Right ventricle myocardium inferior (tissue), 1 donor: ENCODE measurements at regions of chr12 and their contacts with region 1.

Region 1: DNA sequence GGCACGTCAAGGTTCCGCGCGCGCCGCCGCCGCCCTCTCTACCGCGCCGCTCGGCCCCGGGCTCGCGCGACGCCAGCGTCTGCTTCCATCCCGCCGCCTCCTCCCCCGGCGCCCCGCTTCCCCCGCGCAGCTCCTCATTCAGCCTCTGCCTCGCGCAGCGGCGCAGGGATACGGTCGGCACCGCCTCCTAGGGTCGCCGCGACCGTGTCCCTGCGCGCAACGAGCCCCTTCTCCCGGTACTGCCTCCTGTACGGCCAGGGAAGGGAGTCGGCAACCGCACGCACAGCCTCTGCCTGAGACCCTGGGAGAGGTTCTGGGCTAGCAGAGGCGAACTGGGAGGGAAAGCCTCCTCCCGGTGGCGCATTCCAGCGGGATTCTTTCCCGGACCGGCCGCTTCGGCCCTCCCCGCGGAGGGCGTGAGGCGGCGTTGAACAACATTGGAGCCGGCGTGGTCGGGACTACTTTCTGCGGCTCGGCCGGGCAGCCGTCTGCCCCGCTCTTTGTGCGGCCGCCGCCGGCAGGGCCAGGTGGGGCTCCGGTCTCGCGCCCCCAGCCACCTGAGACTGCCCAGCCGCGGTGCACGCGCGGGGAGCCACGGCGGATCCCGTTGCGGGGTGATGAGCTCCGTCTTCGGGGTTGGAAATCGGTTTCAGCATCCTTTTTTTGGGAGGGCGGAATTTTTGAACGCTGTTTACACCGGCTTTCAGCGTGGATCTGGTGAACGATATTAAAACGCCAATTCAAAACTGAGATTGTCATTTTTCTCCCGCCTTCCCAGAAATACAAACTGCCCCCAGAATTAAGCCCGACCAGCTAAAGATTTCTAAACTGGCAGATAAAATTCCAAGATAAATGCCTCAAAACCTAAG is at the start of gene LRP6:
- DNase-seq: peak; percentile 94
- ATAC-seq: peak; percentile 98
- total RNA-seq, gene LRP6: 20.1 TPM

Region 2: DNA sequence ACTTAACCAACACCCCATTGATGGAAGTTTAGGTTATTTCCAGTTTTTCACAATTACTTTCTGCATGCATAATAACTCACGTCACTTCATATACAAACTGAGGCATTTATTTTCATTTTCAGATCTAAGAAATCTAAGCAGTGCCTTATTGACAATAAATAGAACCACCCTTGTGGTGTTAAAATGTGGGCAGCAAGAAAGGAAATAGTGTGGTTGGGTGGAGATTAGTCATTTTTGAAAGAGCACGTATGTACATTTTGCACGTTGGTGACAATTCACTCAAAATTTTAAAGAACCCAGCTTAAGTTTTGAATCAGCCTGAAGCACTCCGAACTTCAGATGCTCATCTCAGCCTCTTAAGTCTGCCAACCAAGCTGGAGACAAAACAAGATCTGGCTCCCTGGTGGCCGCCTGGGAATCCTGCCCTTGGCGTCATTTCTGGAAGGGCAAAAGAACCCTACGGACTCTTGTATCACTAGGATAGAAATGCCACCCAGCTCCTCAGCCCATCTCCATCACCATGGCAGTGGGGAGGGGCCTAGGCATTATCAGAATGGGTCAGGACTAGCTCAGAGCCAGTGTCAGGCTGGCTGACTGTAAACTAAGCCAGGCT is 285.9 kb before region 1 on chr12:
- intact Hi-C with region 1: no loop called
- DNase-seq: no peak
- ATAC-seq: no peak

Region 3: GRCh38 chr12:12159988-12160387 is 107.1 kb before region 1 on chr12:
- intact Hi-C with region 1: loop called (anchors 5 kb)
- DNase-seq: no peak
- ATAC-seq: no peak

Region 4: DNA sequence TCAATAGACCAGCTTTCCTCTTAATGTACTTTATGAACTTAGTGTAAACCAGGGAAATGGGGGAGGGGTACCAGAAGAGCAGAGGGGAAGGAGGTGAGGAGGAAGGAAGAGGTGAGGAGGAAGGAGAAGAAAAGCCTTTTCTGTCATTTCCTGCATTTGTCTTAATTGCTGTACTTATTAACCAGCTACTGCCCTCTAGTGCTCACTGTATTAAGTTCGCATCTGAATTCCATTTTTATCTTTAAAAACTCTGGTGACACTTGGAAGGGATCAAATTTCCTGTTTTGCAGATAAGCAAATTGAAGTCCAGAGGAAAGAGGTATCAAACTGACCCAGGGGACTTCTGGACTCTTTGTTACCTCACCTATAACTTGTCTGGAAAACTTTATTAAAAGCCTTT is 60.7 kb after region 1 on chr12:
- intact Hi-C with region 1: loop called (anchors 5 kb)
- DNase-seq: no peak
- ATAC-seq: no peak